ENCODE measurements at regions of chrX and their contacts with region 1.

Region 1: GRCh38 chrX:154490414-154491083 is at the start of gene SLC10A3:
- DNase-seq: peak; percentile 97
- H3K4me3 ChIP-seq: peak within 1 kb of the TSS; percentile 41 to 77 (median 70)
- H3K27ac ChIP-seq: peak within 1 kb of the TSS; percentile 90 to 98 (median 94)
- H3K4me1 ChIP-seq: peaks cover 0 to 27% (median 12%) of the 10 kb centered on the region in 4 donors
- H3K27me3 ChIP-seq: no peaks in the 10 kb centered on the region
- CTCF ChIP-seq: no peak
- EP300 ChIP-seq: no peak
- POLR2A ChIP-seq: peak; percentile 35 to 82
- total RNA-seq, gene SLC10A3: 17.5 to 28.8 (median 20.7) TPM

Region 2: DNA sequence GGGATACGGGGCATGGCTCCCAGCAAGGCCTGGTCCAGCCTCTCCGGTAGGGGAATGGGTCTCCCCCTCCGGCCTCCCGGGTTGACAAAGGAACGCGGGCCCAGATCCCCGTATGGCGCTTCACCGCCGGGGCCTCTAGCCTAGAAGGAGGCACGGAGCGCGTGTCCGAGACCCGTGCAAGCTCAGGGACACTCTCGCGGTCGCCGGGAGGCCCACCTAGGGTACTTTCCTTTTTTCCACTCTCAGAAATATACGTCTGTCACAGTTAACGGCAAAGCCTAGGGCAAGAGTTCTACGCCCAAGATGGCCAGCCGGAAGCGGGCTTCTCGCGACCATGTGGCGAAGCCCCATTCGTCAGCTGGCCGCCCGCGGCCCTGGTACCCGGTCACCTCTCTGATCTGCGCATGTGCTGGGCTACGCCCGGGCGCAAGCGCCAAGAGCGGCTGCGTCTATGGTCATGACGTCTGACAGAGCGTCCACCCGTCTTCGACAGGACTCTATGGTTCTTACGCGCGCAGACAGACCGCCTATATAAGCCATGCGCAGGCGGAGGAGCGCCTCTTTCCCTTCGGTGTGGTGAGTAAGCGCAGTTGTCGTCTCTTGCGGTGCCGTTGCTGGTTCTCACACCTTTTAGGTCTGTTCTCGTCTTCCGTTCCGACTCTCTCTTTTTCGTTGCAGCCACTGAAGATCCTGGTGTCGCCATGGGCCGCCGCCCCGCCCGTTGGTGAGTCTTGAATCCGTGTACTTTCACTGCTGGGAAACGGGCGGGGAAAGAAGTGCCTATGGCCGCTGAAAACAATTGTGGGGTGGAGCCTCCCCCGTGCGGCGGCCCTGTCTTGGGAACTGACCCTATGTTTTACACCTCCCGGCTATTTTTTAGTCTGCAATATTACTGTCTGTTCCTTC is 92.5 kb before region 1 on chrX and contains the start of gene RPL10:
- intact Hi-C with region 1: loop called (anchors 5 kb)
- DNase-seq: peak; percentile 98
- H3K4me3 ChIP-seq: peak within 1 kb of the TSS; percentile 59 to 80 (median 68)
- H3K27ac ChIP-seq: peak within 1 kb of the TSS; percentile 95 to 98 (median 97)
- H3K4me1 ChIP-seq: peaks cover 0 to 20% (median 13%) of the 10 kb centered on the region in 4 donors
- H3K27me3 ChIP-seq: no peaks in the 10 kb centered on the region
- CTCF ChIP-seq: no peak
- EP300 ChIP-seq: peak in 1 of 4 donors; percentile 78
- POLR2A ChIP-seq: peak; percentile 95
- total RNA-seq, gene RPL10: 3,138 to 8,651 (median 6,770) TPM

Region 3: GRCh38 chrX:154436983-154437719 is 53.4 kb before region 1 on chrX and contains the start of gene GDI1:
- intact Hi-C with region 1: loop called (anchors 5 kb)
- DNase-seq: peak; percentile 82
- H3K4me3 ChIP-seq: peak within 1 kb of the TSS; percentile 48 to 76 (median 70)
- H3K27ac ChIP-seq: peak within 1 kb of the TSS; percentile 85 to 93 (median 88)
- H3K4me1 ChIP-seq: peaks cover 0 to 26% (median 13%) of the 10 kb centered on the region in 4 donors
- H3K27me3 ChIP-seq: no peaks in the 10 kb centered on the region
- CTCF ChIP-seq: no peak
- EP300 ChIP-seq: no peak
- POLR2A ChIP-seq: peak; percentile 30 to 35
- total RNA-seq, gene GDI1: 71.7 to 101 (median 86.1) TPM

Region 4: DNA sequence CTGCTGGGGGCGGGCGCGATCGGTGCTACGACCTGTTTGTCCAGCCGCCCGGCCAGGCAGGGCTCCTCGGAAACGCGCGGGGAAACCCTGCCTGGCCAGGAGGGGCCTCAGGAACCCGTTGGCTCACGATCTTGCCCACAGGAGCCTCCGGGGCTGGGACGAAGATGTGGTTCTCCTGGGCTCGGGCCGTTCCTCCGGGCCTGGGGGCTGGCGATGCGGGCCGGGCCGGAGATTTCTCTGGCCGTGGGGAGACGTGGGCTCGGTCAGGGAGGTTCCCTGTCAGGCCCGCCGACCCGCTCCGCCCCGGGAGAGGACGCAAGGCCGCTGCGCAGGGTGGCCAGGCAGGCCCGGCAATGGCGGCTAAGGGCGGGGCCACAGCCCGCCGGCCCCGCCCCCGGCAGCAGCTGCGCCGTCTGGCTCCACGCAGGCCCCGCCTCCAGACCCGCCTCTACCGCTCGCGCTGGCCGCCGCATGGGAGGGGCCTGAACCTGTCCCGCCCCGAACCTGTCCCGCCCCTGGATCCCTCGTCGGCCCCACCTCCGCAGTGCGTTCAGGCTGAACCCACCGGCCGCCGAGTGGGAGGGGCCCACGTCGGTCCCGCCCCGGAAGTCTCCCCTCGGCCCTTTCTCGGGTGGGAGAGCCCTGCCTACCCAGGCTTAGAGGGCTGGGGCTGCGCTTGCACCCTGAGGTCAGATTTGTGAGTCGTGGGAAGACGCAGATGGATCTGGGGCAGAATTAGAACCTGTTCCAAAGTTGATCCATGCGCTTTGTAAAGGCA is 25.5 kb after region 1 on chrX and contains the start of gene FAM3A:
- intact Hi-C with region 1: loop called (anchors 1 kb)
- DNase-seq: peak; percentile 97
- H3K4me3 ChIP-seq: peak within 1 kb of the TSS; percentile 59 to 67 (median 66)
- H3K27ac ChIP-seq: peak within 1 kb of the TSS; percentile 88 to 95 (median 91)
- H3K4me1 ChIP-seq: peaks cover 0 to 24% (median 17%) of the 10 kb centered on the region in 4 donors
- H3K27me3 ChIP-seq: no peaks in the 10 kb centered on the region
- CTCF ChIP-seq: no peak
- EP300 ChIP-seq: no peak
- POLR2A ChIP-seq: peak; percentile 71 to 76
- total RNA-seq, gene FAM3A: 30.7 to 49.0 (median 40.6) TPM

Region 5: GRCh38 chrX:154534862-154535670 is 44.5 kb after region 1 on chrX:
- intact Hi-C with region 1: loop called (anchors 5 kb)
- DNase-seq: peak; percentile 94
- H3K4me3 ChIP-seq: no peak overlapping the region
- H3K27ac ChIP-seq: peak overlapping the region; percentile 17 to 70 (median 62)
- H3K4me1 ChIP-seq: peaks cover 0 to 5% (median 4%) of the 10 kb centered on the region in 4 donors
- H3K27me3 ChIP-seq: no peaks in the 10 kb centered on the region
- CTCF ChIP-seq: peak; percentile 86 to 99 (median 95)
- EP300 ChIP-seq: no peak
- POLR2A ChIP-seq: no peak

Region 6: DNA sequence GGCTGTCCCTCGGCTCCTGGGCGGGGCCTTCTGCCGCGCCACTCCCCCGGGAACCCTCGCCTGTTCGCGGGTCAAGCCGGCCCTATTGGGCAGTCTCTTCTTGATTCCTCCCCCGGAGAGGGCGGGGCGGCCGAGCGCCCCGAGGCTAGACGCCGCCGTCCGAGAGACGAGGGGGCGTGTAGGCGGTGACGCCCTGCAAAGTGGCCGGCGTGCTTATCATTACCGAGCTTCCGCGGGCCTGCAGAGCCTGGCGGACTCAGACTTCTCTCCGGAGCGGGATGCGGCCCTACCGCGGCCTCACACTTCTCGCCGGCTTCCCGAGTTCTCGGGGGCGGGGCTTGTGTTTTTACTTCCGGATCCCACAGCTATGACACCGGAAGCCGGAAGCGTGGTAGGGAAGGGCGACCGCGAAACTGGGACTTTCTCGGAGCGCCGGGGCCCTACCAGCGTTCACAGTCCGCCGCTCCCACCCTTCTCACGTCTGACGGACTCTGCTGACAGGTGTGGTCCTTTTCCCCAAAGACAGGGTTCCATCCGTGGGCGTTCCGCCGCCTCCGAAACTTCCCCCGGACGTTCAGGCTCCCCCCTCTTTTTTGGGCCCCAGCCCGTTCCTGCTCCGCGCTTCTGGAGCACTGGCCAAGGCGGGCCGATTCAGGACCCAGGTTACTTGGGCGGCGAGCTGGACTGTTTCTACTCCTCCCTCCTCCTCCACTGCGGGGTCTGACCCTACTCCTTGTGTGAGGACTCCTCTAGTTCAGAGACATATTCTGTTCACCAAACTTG is 56.9 kb after region 1 on chrX and contains the start of gene IKBKG:
- intact Hi-C with region 1: no loop called
- DNase-seq: peak; percentile 96
- H3K4me3 ChIP-seq: peak within 1 kb of the TSS; percentile 55 to 64 (median 63)
- H3K27ac ChIP-seq: peak within 1 kb of the TSS; percentile 82 to 87 (median 84)
- H3K4me1 ChIP-seq: peaks cover 0 to 18% (median 12%) of the 10 kb centered on the region in 4 donors
- H3K27me3 ChIP-seq: no peaks in the 10 kb centered on the region
- CTCF ChIP-seq: no peak
- EP300 ChIP-seq: no peak
- POLR2A ChIP-seq: peak; percentile 31 to 35
- total RNA-seq, gene IKBKG: 9.2 to 27.4 (median 13.3) TPM

Region 7: DNA sequence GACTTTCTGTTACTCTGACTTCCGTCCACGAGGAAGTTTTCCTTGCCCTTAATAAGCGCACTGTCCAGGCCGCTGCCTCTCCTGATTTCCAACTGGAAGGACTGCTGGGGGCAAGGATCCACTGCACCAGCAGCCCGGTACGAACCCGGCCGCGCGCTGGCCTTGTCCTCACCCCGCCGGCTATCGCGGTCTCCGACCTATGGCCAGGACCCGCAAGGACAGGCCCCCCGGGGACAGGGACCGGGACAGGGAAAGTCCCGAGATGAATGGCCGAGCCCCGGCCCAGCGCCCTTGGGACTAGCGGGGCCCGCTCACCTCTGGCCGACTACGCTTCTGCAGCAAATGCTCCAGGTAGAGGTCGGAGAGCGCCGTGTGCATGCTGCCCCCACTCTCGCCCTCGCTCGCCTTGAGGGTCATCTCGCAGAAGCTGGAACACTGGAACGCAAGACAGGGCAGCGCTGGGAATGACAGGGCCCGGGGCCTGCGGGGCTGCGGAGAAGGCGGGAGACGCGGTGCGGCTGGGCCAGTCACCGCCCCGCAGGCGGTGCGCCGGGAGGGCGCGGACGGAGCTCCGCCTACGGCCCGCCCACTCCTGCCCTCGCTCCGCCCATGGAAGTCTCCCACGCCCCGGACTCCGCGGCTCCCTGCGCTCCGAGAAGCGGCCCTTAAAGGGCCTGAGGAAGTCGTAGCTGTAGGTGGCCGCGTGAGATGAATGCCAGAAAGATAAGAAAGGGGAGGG is 314.6 kb after region 1 on chrX and contains the start of gene MPP1:
- intact Hi-C with region 1: no loop called
- DNase-seq: peak; percentile 87
- H3K4me3 ChIP-seq: peak within 1 kb of the TSS; percentile 48 to 69 (median 67)
- H3K27ac ChIP-seq: peak within 1 kb of the TSS; percentile 80 to 83 (median 82)
- H3K4me1 ChIP-seq: peaks cover 0 to 17% (median 6%) of the 10 kb centered on the region in 4 donors
- H3K27me3 ChIP-seq: no peaks in the 10 kb centered on the region
- CTCF ChIP-seq: no peak
- EP300 ChIP-seq: no peak
- POLR2A ChIP-seq: peak; percentile 29 to 36
- total RNA-seq, gene MPP1: 24.6 to 36.7 (median 28.2) TPM

Region 8: GRCh38 chrX:155231163-155231562 is 740.6 kb after region 1 on chrX:
- intact Hi-C with region 1: no loop called
- DNase-seq: no peak
- H3K4me3 ChIP-seq: no peak overlapping the region
- H3K27ac ChIP-seq: no peak overlapping the region
- H3K4me1 ChIP-seq: no peaks in the 10 kb centered on the region
- H3K27me3 ChIP-seq: no peaks in the 10 kb centered on the region
- CTCF ChIP-seq: no peak
- EP300 ChIP-seq: no peak
- POLR2A ChIP-seq: no peak